ENCODE measurements at regions of chr2 and their contacts with region 1.

Region 1: GRCh38 chr2:200901459-200902072 is 12.4 kb downstream of the NIF3L1 start:
- DNase-seq: peak; percentile 74
- H3K4me3 ChIP-seq: no peak overlapping the region
- H3K27ac ChIP-seq: no peak overlapping the region
- H3K4me1 ChIP-seq: no peaks in the 10 kb centered on the region
- H3K27me3 ChIP-seq: no peaks in the 10 kb centered on the region
- CTCF ChIP-seq: peak; percentile 39 to 73 (median 66)
- EP300 ChIP-seq: no peak
- POLR2A ChIP-seq: no peak

Region 2: DNA sequence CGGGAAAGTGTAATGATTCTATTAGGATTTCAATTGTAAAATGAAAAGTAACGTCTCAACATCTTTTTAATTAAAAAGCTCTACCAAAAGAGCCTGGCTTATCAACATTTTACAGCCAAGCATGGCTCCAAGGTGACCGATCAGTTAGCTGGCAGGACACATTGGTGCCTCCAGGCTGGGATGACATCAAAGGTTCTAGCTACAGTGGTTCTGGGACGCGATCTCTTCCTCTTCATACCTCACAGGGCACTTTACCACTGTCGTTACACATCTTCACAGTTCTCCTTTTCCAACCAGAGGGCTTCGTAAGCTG is 61.2 kb after region 1 on chr2:
- intact Hi-C with region 1: no loop called
- DNase-seq: no peak
- H3K4me3 ChIP-seq: peak overlapping the region; percentile 71 to 98 (median 91)
- H3K27ac ChIP-seq: peak overlapping the region; percentile 84 to 96 (median 90)
- H3K4me1 ChIP-seq: peaks cover 0 to 28% (median 13%) of the 10 kb centered on the region in 4 donors
- H3K27me3 ChIP-seq: no peaks in the 10 kb centered on the region
- CTCF ChIP-seq: no peak
- EP300 ChIP-seq: no peak
- POLR2A ChIP-seq: no peak

Region 3: DNA sequence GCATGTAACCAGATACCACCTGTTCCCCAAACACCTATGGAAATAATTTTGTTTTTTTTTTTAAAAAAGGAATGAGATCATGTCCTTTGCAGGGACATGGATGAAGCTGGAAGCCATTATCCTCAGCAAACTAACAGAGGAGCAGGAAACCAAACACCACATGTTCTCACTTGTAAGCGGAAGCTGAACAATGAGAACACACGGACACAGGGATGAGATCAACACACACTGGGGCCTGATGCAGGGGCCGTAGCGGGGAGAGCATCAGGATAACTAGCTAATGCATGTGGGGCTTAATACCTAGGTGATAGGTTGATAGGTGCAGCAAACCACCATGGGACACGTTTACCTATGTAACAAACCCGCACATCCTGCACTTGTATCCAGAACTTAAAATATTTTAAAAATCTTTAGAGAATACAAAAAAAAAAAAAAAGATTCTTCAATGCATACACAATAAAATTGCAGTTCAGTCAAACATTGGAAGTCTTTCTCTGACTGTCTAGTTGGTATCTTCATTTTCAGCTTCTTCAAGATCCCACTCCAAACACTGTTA is 269.8 kb after region 1 on chr2:
- intact Hi-C with region 1: loop called (anchors 10 kb)
- DNase-seq: no peak
- H3K4me3 ChIP-seq: no peak overlapping the region
- H3K27ac ChIP-seq: no peak overlapping the region
- H3K4me1 ChIP-seq: no peaks in the 10 kb centered on the region
- H3K27me3 ChIP-seq: no peaks in the 10 kb centered on the region
- CTCF ChIP-seq: no peak
- EP300 ChIP-seq: no peak
- POLR2A ChIP-seq: no peak

Measured in sigmoid colon (tissue), 7 donors.